B cell (primary cell): ENCODE measurements at regions of chr2 and their contacts with region 1.

Region 1: GRCh38 chr2:63861220-63861822 is 19.6 kb downstream of the UGP2 start:
- DNase-seq: peak; percentile 76
- ATAC-seq: peak; percentile 69
- H3K4me3 ChIP-seq: no peak overlapping the region
- H3K4me3 Mint-ChIP-seq: no peak overlapping the region
- H3K27ac ChIP-seq: no peak overlapping the region
- H3K27ac Mint-ChIP-seq: no peak overlapping the region
- H3K4me1 ChIP-seq: peaks cover 0 to 2% of the 10 kb centered on the region in 2 donors
- H3K4me1 Mint-ChIP-seq: peaks cover 13% of the 10 kb centered on the region
- H3K27me3 ChIP-seq: no peaks in the 10 kb centered on the region
- H3K27me3 Mint-ChIP-seq: no peaks in the 10 kb centered on the region
- CTCF ChIP-seq: peak; percentile 77

Region 2: DNA sequence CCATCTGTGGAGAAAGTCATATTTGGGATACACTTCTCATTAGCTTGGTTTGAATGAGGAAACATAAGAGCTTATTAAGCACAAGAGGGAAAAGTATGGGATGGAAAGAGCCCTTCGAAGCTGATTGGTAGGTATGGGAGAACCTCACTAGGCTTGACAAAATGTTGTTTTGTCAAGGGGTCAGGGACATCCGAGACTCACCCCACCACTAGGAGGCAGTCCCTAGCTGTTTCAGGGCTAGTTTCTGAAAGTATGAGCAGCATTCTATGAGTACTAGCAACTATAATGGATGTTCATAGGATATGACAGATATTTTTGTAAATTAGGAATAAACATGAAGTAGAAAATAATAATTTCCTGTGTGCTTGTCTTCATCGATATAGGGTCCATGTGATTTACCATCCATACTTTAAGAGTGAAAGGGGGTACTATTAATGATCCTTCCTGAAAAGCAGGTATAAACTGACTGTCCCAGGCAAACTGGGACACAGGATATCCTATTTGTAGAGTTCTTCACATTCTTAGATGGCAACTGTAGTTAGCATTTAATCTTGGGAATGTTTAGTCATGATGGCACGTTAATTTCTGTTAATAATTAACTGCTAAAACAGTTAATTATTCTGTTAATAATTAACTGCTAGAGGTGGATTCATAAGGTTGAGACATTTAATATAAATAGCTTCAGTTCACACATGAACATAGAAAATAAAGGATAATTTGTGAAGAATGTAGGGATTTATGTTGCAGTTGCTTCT is 782.3 kb before region 1 on chr2:
- CTCF ChIA-PET with region 1: no interaction called
- POLR2A ChIA-PET with region 1: no interaction called
- intact Hi-C with region 1: loop called (anchors 10 kb)
- DNase-seq: no peak
- ATAC-seq: no peak
- H3K4me3 ChIP-seq: no peak overlapping the region
- H3K4me3 Mint-ChIP-seq: no peak overlapping the region
- H3K27ac ChIP-seq: no peak overlapping the region
- H3K27ac Mint-ChIP-seq: no peak overlapping the region
- H3K4me1 ChIP-seq: no peaks in the 10 kb centered on the region
- H3K4me1 Mint-ChIP-seq: no peaks in the 10 kb centered on the region
- H3K27me3 ChIP-seq: peaks cover 0 to 9% (median 2%) of the 10 kb centered on the region in 4 experiments
- H3K27me3 Mint-ChIP-seq: peaks cover 32% of the 10 kb centered on the region
- CTCF ChIP-seq: peak; percentile 31

Region 3: GRCh38 chr2:63692002-63692606 is 169.2 kb before region 1 on chr2:
- CTCF ChIA-PET with region 1: interaction called, 178 read pairs
- POLR2A ChIA-PET with region 1: no interaction called
- intact Hi-C with region 1: loop called (anchors 1 kb)
- DNase-seq: peak; percentile 55
- ATAC-seq: no peak
- H3K4me3 ChIP-seq: no peak overlapping the region
- H3K4me3 Mint-ChIP-seq: no peak overlapping the region
- H3K27ac ChIP-seq: no peak overlapping the region
- H3K27ac Mint-ChIP-seq: no peak overlapping the region
- H3K4me1 ChIP-seq: no peaks in the 10 kb centered on the region
- H3K4me1 Mint-ChIP-seq: no peaks in the 10 kb centered on the region
- H3K27me3 ChIP-seq: no peaks in the 10 kb centered on the region
- H3K27me3 Mint-ChIP-seq: no peaks in the 10 kb centered on the region
- CTCF ChIP-seq: peak; percentile 68

Region 4: GRCh38 chr2:63698825-63699548 is 162.3 kb before region 1 on chr2:
- CTCF ChIA-PET with region 1: interaction called, 178 read pairs
- POLR2A ChIA-PET with region 1: no interaction called
- intact Hi-C with region 1: loop called (anchors 1 kb)
- DNase-seq: peak; percentile 30
- ATAC-seq: peak; percentile 57
- H3K4me3 ChIP-seq: no peak overlapping the region
- H3K4me3 Mint-ChIP-seq: no peak overlapping the region
- H3K27ac ChIP-seq: no peak overlapping the region
- H3K27ac Mint-ChIP-seq: no peak overlapping the region
- H3K4me1 ChIP-seq: no peaks in the 10 kb centered on the region
- H3K4me1 Mint-ChIP-seq: no peaks in the 10 kb centered on the region
- H3K27me3 ChIP-seq: no peaks in the 10 kb centered on the region
- H3K27me3 Mint-ChIP-seq: no peaks in the 10 kb centered on the region
- CTCF ChIP-seq: peak; percentile 29

Region 5: DNA sequence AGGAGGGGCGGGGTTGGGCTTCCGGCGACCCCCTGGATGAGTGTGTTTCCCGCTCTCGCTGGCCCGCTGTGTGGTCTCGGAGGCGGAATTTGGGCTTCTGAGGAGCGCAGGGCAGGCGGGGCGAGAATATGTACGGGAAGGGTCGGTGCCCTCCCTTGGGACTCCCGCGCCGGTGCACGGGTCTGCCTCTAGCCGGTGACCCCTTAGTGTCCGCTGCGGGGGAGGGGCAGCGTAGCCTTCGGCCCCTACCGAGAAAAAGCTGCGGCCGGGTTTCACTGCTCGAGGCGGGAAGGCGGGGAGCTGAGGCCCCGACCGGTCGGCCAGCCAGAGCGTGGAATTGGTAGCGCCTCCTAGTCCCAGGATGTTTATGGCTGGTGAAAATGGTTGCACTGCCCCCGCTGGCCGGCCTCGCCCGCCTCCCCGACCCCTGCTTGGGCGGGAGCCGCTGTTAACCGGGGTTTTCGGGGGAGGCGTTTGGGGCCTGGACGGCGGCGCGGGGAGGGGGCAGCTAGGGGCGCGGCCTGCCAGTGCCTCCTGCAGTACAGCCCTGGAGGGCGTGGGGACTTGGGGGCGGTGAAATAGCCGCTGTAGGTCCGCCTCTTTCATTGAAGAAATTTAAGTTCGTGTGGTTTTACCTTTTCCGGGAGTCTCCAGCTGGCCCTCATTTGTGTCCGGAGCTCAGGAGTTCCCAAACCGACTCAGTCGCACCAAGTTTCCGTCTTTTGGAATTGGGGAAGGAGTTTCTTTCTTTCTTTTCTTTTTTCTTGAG is 19.9 kb before region 1 on chr2 and contains the start of gene UGP2:
- CTCF ChIA-PET with region 1: interaction called, 60 read pairs
- POLR2A ChIA-PET with region 1: no interaction called
- intact Hi-C with region 1: loop called (anchors 2 kb)
- DNase-seq: peak; percentile 88
- ATAC-seq: peak; percentile 60
- H3K4me3 ChIP-seq: peak within 1 kb of the TSS; percentile 86 to 98 (median 96)
- H3K4me3 Mint-ChIP-seq: peak within 1 kb of the TSS; percentile 98
- H3K27ac ChIP-seq: peak within 1 kb of the TSS; percentile 82 to 91
- H3K27ac Mint-ChIP-seq: peak within 1 kb of the TSS; percentile 95
- H3K4me1 ChIP-seq: peaks cover 19 to 20% of the 10 kb centered on the region in 2 donors
- H3K4me1 Mint-ChIP-seq: peaks cover 51% of the 10 kb centered on the region
- H3K27me3 ChIP-seq: no peaks in the 10 kb centered on the region
- H3K27me3 Mint-ChIP-seq: no peaks in the 10 kb centered on the region
- CTCF ChIP-seq: no peak
- total RNA-seq, gene UGP2: 61.5 and 68.8 TPM in 2 replicates

Region 6: DNA sequence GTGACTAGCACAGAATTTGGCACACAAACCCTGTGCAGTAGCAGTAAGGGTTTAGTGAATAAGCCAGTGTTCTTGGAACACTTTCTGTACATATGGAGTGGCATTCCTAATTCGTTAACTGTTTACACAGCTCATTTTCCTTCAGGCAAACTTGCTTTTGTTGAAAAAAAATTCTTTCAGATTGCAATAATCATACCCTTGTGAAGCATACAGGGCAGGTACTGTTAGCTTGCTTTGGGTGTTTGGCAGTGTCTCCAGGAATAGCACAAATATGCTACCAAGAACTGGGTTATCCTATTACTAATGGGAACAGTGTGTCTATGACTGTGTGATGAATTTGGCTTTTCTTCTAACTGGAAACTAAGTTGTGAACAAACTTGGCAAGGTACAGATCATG is 13.8 kb after region 1 on chr2:
- CTCF ChIA-PET with region 1: interaction called, 34 read pairs
- POLR2A ChIA-PET with region 1: no interaction called
- intact Hi-C with region 1: no loop called
- DNase-seq: no peak
- ATAC-seq: no peak
- H3K4me3 ChIP-seq: no peak overlapping the region
- H3K4me3 Mint-ChIP-seq: no peak overlapping the region
- H3K27ac ChIP-seq: no peak overlapping the region
- H3K27ac Mint-ChIP-seq: no peak overlapping the region
- H3K4me1 ChIP-seq: no peaks in the 10 kb centered on the region
- H3K4me1 Mint-ChIP-seq: peaks cover 8% of the 10 kb centered on the region
- H3K27me3 ChIP-seq: no peaks in the 10 kb centered on the region
- H3K27me3 Mint-ChIP-seq: no peaks in the 10 kb centered on the region
- CTCF ChIP-seq: no peak

Region 7: DNA sequence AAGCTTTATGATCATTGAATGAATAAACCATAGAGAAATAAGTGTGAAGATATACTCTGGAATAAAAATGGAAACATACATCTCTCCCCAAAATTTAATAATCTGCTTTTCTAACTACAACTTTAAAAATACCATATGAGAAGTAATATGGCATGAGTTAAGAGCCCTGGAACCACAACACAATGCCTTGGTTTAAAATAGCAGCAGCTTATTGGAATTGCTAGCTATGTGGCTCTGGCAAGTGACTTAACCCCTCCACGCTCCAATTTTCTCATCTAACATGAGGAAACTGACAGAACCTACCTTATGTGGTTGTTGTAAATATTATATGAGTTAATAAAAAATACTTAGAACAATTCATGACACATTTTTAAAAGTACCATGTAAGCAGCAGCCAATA is 81.5 kb after region 1 on chr2:
- CTCF ChIA-PET with region 1: no interaction called
- POLR2A ChIA-PET with region 1: no interaction called
- intact Hi-C with region 1: no loop called
- DNase-seq: no peak
- ATAC-seq: no peak
- H3K4me3 ChIP-seq: no peak overlapping the region
- H3K4me3 Mint-ChIP-seq: no peak overlapping the region
- H3K27ac ChIP-seq: no peak overlapping the region
- H3K27ac Mint-ChIP-seq: no peak overlapping the region
- H3K4me1 ChIP-seq: no peaks in the 10 kb centered on the region
- H3K4me1 Mint-ChIP-seq: no peaks in the 10 kb centered on the region
- H3K27me3 ChIP-seq: no peaks in the 10 kb centered on the region
- H3K27me3 Mint-ChIP-seq: no peaks in the 10 kb centered on the region
- CTCF ChIP-seq: no peak

Region 8: DNA sequence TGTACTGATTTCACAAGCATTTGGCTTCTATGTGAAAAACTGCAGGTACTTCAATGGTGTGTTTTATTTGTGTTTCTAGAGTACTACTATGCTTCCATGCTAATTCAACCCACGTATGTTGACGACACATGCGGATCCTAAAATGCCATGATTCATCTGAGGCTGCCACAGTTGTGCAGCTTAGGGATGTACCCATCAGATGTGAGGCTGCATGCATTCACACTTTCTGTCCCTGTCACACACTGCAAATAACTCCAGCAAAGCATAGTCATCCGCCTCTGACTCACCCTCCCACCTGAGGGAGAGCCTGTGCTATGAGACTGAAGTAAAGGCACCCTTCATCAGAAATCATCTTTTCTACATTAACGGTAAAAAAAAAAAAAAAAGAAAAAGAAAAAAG is 814.5 kb after region 1 on chr2:
- CTCF ChIA-PET with region 1: no interaction called
- POLR2A ChIA-PET with region 1: no interaction called
- intact Hi-C with region 1: no loop called
- DNase-seq: no peak
- ATAC-seq: no peak
- H3K4me3 ChIP-seq: no peak overlapping the region
- H3K4me3 Mint-ChIP-seq: no peak overlapping the region
- H3K27ac ChIP-seq: no peak overlapping the region
- H3K27ac Mint-ChIP-seq: no peak overlapping the region
- H3K4me1 ChIP-seq: peaks cover 8 to 10% of the 10 kb centered on the region in 2 donors
- H3K4me1 Mint-ChIP-seq: peaks cover 20% of the 10 kb centered on the region
- H3K27me3 ChIP-seq: no peaks in the 10 kb centered on the region
- H3K27me3 Mint-ChIP-seq: no peaks in the 10 kb centered on the region
- CTCF ChIP-seq: no peak